ENCODE measurements at regions of chr15 and their contacts with region 1.

Region 1: GRCh38 chr15:47674586-47675232 is 42.6 kb upstream of the SEMA6D start:
- DNase-seq: no peak
- H3K4me3 ChIP-seq: no peak overlapping the region
- H3K27ac ChIP-seq: no peak overlapping the region
- H3K4me1 ChIP-seq: no peaks in the 10 kb centered on the region
- H3K27me3 ChIP-seq: no peaks in the 10 kb centered on the region
- CTCF ChIP-seq: no peak

Region 2: GRCh38 chr15:47598996-47599395 is 75.7 kb before region 1 on chr15:
- CTCF ChIA-PET with region 1: no interaction called
- dilution Hi-C with region 1: no loop called
- in situ Hi-C with region 1: no loop called
- intact Hi-C with region 1: no loop called
- DNase-seq: no peak
- H3K4me3 ChIP-seq: no peak overlapping the region
- H3K27ac ChIP-seq: no peak overlapping the region
- H3K4me1 ChIP-seq: no peaks in the 10 kb centered on the region
- H3K27me3 ChIP-seq: no peaks in the 10 kb centered on the region
- CTCF ChIP-seq: no peak

Region 3: DNA sequence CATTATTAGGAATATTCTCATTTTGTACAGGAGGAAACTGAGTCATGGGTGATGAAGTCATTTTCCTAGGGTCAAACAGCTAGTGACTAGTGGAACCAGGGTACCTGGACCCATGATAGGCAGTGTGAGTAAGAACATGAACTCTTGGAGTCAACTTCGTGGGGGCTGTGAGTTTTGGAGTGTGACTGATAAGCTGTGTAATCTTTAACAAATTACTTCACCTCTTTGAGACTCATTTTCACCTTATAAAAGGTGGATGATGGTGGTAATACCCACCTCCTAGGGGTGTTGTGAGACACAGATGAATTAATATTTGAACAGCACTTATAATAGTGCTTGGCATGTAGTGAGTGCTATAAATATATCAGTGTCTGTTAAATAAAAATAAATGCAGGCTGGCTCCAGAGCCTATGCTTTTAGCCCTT is 51.7 kb after region 1 on chr15:
- CTCF ChIA-PET with region 1: no interaction called
- dilution Hi-C with region 1: loop called (anchors 5 kb)
- in situ Hi-C with region 1: no loop called
- intact Hi-C with region 1: no loop called
- DNase-seq: peak; percentile 3
- H3K4me3 ChIP-seq: no peak overlapping the region
- H3K27ac ChIP-seq: no peak overlapping the region
- H3K4me1 ChIP-seq: peaks cover 5% of the 10 kb centered on the region
- H3K27me3 ChIP-seq: no peaks in the 10 kb centered on the region
- CTCF ChIP-seq: no peak

Region 4: DNA sequence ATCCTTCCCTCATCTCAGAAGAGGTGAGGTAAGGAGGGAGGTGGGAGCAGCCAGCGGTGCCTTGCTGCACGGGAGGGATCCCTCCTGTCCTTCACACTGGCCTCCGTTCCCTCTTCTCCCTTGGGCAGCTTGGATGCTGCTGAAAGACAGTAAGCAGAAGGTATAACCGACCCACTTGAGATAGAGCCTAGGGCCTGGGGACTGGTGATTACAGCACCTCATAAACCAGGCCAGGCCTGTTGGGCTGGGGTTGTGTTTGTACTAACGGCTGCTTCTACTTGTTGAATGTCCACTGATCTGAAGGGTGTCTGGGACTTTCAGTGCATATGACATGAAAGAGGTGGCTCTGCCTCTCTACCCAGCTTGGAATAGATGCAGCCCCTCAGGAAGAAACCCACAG is 67.6 kb after region 1 on chr15:
- CTCF ChIA-PET with region 1: no interaction called
- dilution Hi-C with region 1: no loop called
- in situ Hi-C with region 1: no loop called
- intact Hi-C with region 1: no loop called
- DNase-seq: no peak
- H3K4me3 ChIP-seq: no peak overlapping the region
- H3K27ac ChIP-seq: no peak overlapping the region
- H3K4me1 ChIP-seq: no peaks in the 10 kb centered on the region
- H3K27me3 ChIP-seq: no peaks in the 10 kb centered on the region
- CTCF ChIP-seq: no peak

Measured in mammary epithelial cell (primary cell).